Naive thymus-derived CD4-positive, alpha-beta T cell (primary cell): ENCODE measurements at regions of chr10 and their contacts with region 1.

Region 1: DNA sequence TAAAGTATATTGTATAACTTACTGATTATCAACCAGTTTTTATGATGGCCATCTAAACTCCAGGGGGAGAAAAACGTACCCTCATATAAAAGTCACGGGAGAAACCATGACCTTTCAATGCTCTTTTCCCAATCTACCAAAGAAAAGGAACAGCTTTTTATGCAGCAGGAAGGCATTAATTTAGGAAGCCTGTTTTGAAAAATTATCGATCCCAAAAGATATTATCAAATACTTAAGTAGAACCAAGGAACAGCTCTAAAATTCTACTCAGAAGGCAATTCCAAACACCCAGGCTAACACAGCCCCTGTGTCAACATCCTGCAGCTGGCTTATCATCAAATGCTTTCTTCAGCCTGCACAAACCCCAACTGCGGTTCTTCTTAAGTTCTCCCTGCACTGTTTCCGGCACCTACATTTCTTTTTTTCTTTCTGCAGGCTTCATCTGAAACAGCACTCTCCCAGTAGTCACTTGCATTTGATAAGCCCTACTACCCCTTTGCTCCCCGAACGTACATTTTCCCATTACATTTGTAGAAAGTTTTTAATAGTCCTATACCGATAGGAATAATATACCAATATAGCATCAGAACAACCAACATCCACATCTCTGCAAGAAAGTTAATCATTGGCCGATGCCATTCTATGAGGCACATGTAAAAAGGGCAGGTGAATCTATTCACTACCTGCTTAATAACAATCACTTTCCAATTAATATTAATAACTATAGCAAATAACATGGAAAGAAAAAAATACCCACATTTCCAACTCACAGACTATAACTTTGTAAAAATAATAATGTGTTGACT is 47.9 kb downstream of the PIP4K2A start:
- DNase-seq: peak in 8 of 9 donors; percentile 49 to 91 (median 86)
- ATAC-seq: peak; percentile 96
- H3K4me3 ChIP-seq: peak overlapping the region; percentile 57
- H3K4me3 Mint-ChIP-seq: peak overlapping the region; percentile 78 to 97 (median 84)
- H3K27ac ChIP-seq: peak overlapping the region; percentile 59
- H3K27ac Mint-ChIP-seq: peak overlapping the region; percentile 74 to 97 (median 92)
- H3K4me1 ChIP-seq: peaks cover 68 to 75% of the 10 kb centered on the region in 2 donors
- H3K4me1 Mint-ChIP-seq: peaks cover 34 to 96% (median 89%) of the 10 kb centered on the region in 7 donors
- H3K27me3 ChIP-seq: no peaks in the 10 kb centered on the region
- H3K27me3 Mint-ChIP-seq: no peaks in the 10 kb centered on the region

Region 2: DNA sequence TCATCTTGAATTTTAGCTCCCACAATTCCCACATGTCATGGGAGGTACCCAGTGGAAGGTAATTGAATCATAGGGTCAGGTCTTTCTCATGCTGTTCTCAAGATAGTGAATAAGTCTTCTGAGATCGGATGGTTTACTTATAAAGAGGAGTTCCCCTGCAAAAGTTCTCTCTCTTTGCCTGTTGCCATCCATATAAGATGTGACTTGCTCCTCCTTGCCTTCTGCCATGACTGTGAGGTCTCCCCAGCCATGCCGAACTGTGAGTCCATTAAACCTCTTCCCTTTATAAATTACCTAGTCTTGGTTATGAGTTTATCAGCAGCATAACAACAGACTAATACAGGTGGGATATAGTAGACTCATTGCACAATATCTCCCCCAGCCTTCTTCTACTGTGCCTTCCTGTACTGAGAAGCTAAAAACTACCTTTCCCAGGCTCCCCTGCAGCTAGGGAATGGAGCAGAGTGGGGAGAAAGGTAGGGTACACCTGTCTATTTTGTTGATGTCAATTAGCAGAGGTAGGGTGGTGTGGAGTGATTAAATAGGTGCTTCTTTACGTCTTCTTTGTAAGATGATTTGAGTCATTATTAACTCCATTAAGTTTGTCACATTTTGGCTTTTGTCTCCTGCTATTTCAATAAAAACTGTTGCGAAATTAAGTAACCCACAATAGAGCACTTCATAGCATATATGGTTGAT is 400.5 kb before region 1 on chr10:
- CTCF ChIA-PET with region 1: no interaction called
- POLR2A ChIA-PET with region 1: no interaction called
- intact Hi-C with region 1: no loop called
- DNase-seq: no peak
- ATAC-seq: no peak
- H3K4me3 ChIP-seq: no peak overlapping the region
- H3K4me3 Mint-ChIP-seq: no peak overlapping the region
- H3K27ac ChIP-seq: no peak overlapping the region
- H3K27ac Mint-ChIP-seq: no peak overlapping the region
- H3K4me1 ChIP-seq: no peaks in the 10 kb centered on the region
- H3K4me1 Mint-ChIP-seq: peaks cover 0 to 5% (median 2%) of the 10 kb centered on the region in 7 donors
- H3K27me3 ChIP-seq: no peaks in the 10 kb centered on the region
- H3K27me3 Mint-ChIP-seq: peaks cover 6 to 35% (median 26%) of the 10 kb centered on the region in 5 donors

Region 3: DNA sequence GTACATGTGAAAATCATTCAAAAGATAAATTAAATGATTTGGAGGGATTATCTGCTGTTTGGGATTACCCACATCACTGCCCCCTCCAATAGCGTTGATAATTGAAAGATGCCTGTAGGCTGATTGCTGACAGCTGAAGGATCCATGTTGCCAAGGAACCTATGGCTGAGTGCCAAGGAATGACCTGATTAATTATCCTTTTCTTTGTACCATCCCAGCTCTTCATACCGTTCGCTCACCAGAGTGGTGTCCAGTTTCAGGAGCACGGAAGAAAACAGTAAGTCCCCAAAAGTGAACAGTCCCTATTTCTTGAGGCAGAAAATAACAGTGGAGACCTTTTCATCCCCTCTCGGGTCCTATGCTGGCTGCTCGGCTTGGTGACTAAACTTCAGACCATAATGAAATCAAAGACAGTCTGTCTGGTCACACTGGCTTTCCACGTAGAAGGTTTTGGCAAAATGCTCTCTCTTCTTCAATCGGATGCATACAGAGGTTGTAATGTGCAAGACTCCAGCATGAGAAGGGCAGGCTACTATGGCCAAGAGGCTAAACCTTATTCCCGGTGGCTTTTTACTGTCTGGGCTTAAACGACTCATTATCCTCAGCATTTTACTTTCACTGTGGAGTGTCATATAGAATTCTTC is 212.4 kb before region 1 on chr10:
- CTCF ChIA-PET with region 1: no interaction called
- POLR2A ChIA-PET with region 1: no interaction called
- intact Hi-C with region 1: no loop called
- DNase-seq: no peak
- ATAC-seq: no peak
- H3K4me3 ChIP-seq: no peak overlapping the region
- H3K4me3 Mint-ChIP-seq: no peak overlapping the region
- H3K27ac ChIP-seq: no peak overlapping the region
- H3K27ac Mint-ChIP-seq: no peak overlapping the region
- H3K4me1 ChIP-seq: no peaks in the 10 kb centered on the region
- H3K4me1 Mint-ChIP-seq: peaks cover 0 to 19% (median 9%) of the 10 kb centered on the region in 7 donors
- H3K27me3 ChIP-seq: no peaks in the 10 kb centered on the region
- H3K27me3 Mint-ChIP-seq: peaks cover 0 to 11% (median 4%) of the 10 kb centered on the region in 5 donors

Region 4: GRCh38 chr10:22500656-22501340 is 165.7 kb before region 1 on chr10:
- CTCF ChIA-PET with region 1: no interaction called
- POLR2A ChIA-PET with region 1: no interaction called
- intact Hi-C with region 1: no loop called
- DNase-seq: no peak
- ATAC-seq: no peak
- H3K4me3 ChIP-seq: no peak overlapping the region
- H3K4me3 Mint-ChIP-seq: no peak overlapping the region
- H3K27ac ChIP-seq: no peak overlapping the region
- H3K27ac Mint-ChIP-seq: no peak overlapping the region
- H3K4me1 ChIP-seq: peaks cover 0 to 6% of the 10 kb centered on the region in 2 donors
- H3K4me1 Mint-ChIP-seq: peaks cover 0 to 6% (median 0%) of the 10 kb centered on the region in 7 donors
- H3K27me3 ChIP-seq: no peaks in the 10 kb centered on the region
- H3K27me3 Mint-ChIP-seq: peaks cover 4 to 39% (median 9%) of the 10 kb centered on the region in 5 donors

Region 5: GRCh38 chr10:22630234-22631174 is 36.0 kb before region 1 on chr10:
- CTCF ChIA-PET with region 1: interaction called, 3 read pairs
- POLR2A ChIA-PET with region 1: interaction called, 7 read pairs
- intact Hi-C with region 1: loop called in 1 of 2 experiments (anchors 1 kb)
- DNase-seq: peak in 6 of 9 donors; percentile 27 to 73 (median 38)
- ATAC-seq: peak; percentile 89
- H3K4me3 ChIP-seq: peak overlapping the region; percentile 37
- H3K4me3 Mint-ChIP-seq: peak overlapping the region; percentile 3 to 85 (median 72)
- H3K27ac ChIP-seq: peak overlapping the region; percentile 68
- H3K27ac Mint-ChIP-seq: peak overlapping the region; percentile 68 to 98 (median 90)
- H3K4me1 ChIP-seq: peaks cover 66 to 97% of the 10 kb centered on the region in 2 donors
- H3K4me1 Mint-ChIP-seq: peaks cover 65 to 100% (median 98%) of the 10 kb centered on the region in 7 donors
- H3K27me3 ChIP-seq: no peaks in the 10 kb centered on the region
- H3K27me3 Mint-ChIP-seq: no peaks in the 10 kb centered on the region

Region 6: DNA sequence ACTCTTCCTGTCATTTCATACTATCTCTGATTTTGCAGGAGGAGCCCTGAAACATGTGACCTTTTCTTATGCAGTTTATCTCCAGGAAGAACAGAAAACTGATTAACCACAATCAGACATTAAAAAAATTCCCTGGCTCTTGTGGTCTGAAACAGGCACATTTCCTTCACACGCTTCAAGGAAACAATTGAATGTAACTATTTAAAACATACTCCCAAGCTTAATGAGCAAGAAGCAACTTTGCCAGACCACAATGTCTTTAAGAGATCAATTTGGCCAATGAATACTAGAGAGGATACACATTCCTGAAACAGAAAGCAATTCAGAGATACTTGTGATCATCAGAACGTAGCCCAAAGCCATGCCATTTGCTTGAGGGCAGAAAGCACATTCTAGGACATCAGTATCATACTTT is 17.9 kb before region 1 on chr10:
- CTCF ChIA-PET with region 1: interaction called, 4 read pairs
- POLR2A ChIA-PET with region 1: interaction called, 97 read pairs
- intact Hi-C with region 1: loop called in 1 of 2 experiments (anchors 2 kb)
- DNase-seq: no peak
- ATAC-seq: no peak
- H3K4me3 ChIP-seq: peak overlapping the region; percentile 37
- H3K4me3 Mint-ChIP-seq: peak overlapping the region in 9 of 10 donors; percentile 60 to 89 (median 82)
- H3K27ac ChIP-seq: peak overlapping the region; percentile 53
- H3K27ac Mint-ChIP-seq: peak overlapping the region; percentile 75 to 97 (median 93)
- H3K4me1 ChIP-seq: peaks cover 97 to 98% of the 10 kb centered on the region in 2 donors
- H3K4me1 Mint-ChIP-seq: peaks cover 79 to 96% (median 90%) of the 10 kb centered on the region in 7 donors
- H3K27me3 ChIP-seq: no peaks in the 10 kb centered on the region
- H3K27me3 Mint-ChIP-seq: no peaks in the 10 kb centered on the region

Region 7: DNA sequence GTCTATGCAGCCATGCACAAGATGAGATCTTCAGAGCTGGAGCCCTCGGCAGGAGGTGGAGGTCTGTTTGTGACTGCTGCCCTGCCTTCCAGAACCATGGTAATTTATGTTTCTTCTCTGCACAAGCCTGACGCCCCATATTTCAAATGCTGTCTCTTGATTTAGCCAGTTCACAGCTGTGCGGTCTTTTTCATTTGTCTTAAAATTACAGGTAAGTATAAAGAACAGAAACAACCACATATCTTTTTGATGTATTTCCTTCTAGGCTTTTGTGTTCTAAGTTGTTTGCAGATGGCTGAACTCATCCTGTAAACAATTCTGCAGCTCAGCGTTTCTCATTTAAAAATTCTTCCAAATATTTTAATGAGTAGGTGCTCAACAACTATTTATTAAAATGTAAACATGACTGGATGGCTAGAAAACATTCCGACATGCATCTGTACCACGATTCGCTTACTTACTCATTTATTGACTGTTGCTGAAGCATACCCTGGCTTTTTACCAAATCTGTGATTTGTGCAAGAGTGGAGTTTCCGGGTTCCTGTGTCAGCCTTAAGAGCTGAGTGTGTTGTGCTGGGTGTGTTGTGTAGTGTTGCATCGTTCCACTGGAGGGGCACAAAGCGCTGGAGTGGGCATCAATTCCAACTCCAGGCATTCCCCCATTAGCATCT is 11.0 kb before region 1 on chr10:
- CTCF ChIA-PET with region 1: interaction called, 17 read pairs
- POLR2A ChIA-PET with region 1: interaction called, 97 read pairs
- intact Hi-C with region 1: loop called (anchors 1 kb)
- DNase-seq: peak in 7 of 9 donors; percentile 69 to 90 (median 86)
- ATAC-seq: peak; percentile 89
- H3K4me3 ChIP-seq: peak overlapping the region; percentile 23
- H3K4me3 Mint-ChIP-seq: peak overlapping the region; percentile 67 to 87 (median 81)
- H3K27ac ChIP-seq: peak overlapping the region; percentile 54
- H3K27ac Mint-ChIP-seq: peak overlapping the region; percentile 82 to 97 (median 92)
- H3K4me1 ChIP-seq: peaks cover 84 to 88% of the 10 kb centered on the region in 2 donors
- H3K4me1 Mint-ChIP-seq: peaks cover 84 to 100% (median 90%) of the 10 kb centered on the region in 7 donors
- H3K27me3 ChIP-seq: no peaks in the 10 kb centered on the region
- H3K27me3 Mint-ChIP-seq: no peaks in the 10 kb centered on the region

Region 8: DNA sequence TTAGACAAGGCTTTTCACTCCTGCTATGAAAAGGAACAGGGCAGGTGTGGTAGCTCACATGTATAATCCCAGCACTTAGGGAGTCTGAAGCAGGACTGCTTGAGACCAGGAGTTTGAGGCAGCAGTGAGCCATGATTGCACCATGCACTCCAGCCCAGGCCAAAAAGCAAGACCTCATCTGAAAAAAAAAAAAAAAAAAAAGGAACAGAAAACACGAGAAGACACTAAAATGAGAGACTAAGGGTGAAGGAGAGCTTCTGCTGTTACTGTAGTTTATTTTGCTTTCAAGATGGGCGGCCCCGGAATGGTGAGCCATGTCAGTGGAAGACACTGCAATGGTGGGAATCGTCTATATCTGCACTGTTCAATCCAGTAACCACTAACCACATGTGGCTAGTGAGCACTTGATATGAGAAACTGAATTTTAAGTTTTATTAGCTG is 38.0 kb after region 1 on chr10:
- CTCF ChIA-PET with region 1: interaction called, 4 read pairs
- POLR2A ChIA-PET with region 1: interaction called, 17 read pairs
- intact Hi-C with region 1: no loop called
- DNase-seq: no peak
- ATAC-seq: peak; percentile 33
- H3K4me3 ChIP-seq: no peak overlapping the region
- H3K4me3 Mint-ChIP-seq: peak overlapping the region in 9 of 10 donors; percentile 14 to 70 (median 60)
- H3K27ac ChIP-seq: peak overlapping the region; percentile 30
- H3K27ac Mint-ChIP-seq: peak overlapping the region in 8 of 9 donors; percentile 29 to 92 (median 82)
- H3K4me1 ChIP-seq: peaks cover 59 to 93% of the 10 kb centered on the region in 2 donors
- H3K4me1 Mint-ChIP-seq: peaks cover 80 to 100% (median 99%) of the 10 kb centered on the region in 7 donors
- H3K27me3 ChIP-seq: no peaks in the 10 kb centered on the region
- H3K27me3 Mint-ChIP-seq: no peaks in the 10 kb centered on the region

Region 9: GRCh38 chr10:22770270-22770669 is 103.8 kb after region 1 on chr10:
- CTCF ChIA-PET with region 1: no interaction called
- POLR2A ChIA-PET with region 1: no interaction called
- intact Hi-C with region 1: no loop called
- DNase-seq: no peak
- ATAC-seq: no peak
- H3K4me3 ChIP-seq: no peak overlapping the region
- H3K4me3 Mint-ChIP-seq: no peak overlapping the region
- H3K27ac ChIP-seq: no peak overlapping the region
- H3K27ac Mint-ChIP-seq: no peak overlapping the region
- H3K4me1 ChIP-seq: no peaks in the 10 kb centered on the region
- H3K4me1 Mint-ChIP-seq: peaks cover 0 to 4% (median 0%) of the 10 kb centered on the region in 7 donors
- H3K27me3 ChIP-seq: no peaks in the 10 kb centered on the region
- H3K27me3 Mint-ChIP-seq: peaks cover 0 to 2% (median 0%) of the 10 kb centered on the region in 5 donors